Psoas muscle (tissue), 8 donors: ENCODE measurements at regions of chr9 and their contacts with region 1.

Region 1: DNA sequence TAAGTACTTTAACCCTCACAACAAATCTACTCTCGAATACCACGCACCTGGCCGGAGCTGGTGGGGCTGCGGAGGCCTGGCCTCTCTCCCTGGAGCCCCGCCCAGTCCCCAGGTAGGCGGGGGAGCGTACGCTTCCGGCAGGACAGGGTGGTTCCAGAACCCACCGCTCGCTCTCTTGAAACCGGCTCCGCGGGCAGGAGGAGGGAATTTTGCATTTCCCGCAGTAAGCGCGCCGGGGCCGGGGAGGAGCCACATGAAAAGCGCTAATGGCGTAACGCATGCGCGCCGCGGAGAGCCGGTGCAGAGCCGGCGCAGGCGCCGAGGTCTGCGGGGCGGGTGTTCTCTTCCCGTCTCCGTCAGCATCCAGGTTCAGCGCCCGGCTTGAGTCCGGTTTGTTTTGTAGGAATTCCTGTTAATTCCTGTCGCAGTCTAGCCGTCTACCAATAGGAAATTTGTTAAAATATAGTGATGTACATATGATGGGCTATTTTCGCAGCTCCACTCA is 20.8 kb downstream of the CAVIN4 start:
- DNase-seq: peak; percentile 83 to 88
- ATAC-seq: peak; percentile 56 to 87 (median 72)
- H3K4me3 ChIP-seq: peak overlapping the region; percentile 63
- H3K27ac ChIP-seq: no peak overlapping the region
- H3K4me1 ChIP-seq: peaks cover 4% of the 10 kb centered on the region
- H3K27me3 ChIP-seq: no peaks in the 10 kb centered on the region
- CTCF ChIP-seq: no peak

Region 2: DNA sequence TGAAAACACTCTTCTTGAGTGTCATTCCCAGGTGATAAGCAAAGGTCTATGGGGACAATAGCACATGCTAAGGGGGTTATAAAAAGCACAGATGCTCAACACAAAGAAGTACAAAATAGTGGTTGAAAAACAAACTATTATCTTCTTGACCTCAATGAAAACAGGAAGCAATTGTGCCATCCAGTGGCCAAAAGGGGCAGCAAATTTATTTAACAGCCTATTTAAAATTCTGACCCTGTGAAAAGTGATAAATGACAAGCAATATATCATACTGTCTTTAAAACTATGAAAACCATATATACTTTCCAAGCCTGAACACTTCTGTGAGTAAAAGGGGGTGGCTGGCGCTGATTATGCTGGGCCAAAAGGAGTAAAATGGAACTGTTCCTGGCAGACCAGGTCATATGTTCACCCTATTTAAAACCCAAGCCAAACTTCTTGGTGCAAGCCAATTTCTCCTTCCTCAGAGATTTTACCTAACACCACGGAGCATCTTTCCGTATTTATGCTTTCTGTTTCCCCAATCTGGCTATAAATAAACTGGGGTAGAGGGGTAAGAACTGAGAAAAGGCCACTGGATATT is 275.6 kb before region 1 on chr9:
- intact Hi-C with region 1: loop called in 1 of 2 experiments (anchors 5 kb)
- DNase-seq: no peak
- ATAC-seq: peak in 2 of 4 donors; percentile 46 to 69
- H3K4me3 ChIP-seq: no peak overlapping the region
- H3K27ac ChIP-seq: no peak overlapping the region
- H3K4me1 ChIP-seq: no peaks in the 10 kb centered on the region
- H3K27me3 ChIP-seq: no peaks in the 10 kb centered on the region
- CTCF ChIP-seq: peak; percentile 59

Region 3: GRCh38 chr9:100426530-100427428 is 171.9 kb before region 1 on chr9 and contains the start of gene MSANTD3:
- intact Hi-C with region 1: loop called in 1 of 2 experiments (anchors 5 kb)
- DNase-seq: peak; percentile 69 to 81
- ATAC-seq: peak; percentile 77 to 90 (median 84)
- H3K4me3 ChIP-seq: peak within 1 kb of the TSS; percentile 92
- H3K27ac ChIP-seq: peak within 1 kb of the TSS; percentile 91
- H3K4me1 ChIP-seq: peaks cover 35% of the 10 kb centered on the region
- H3K27me3 ChIP-seq: no peaks in the 10 kb centered on the region
- CTCF ChIP-seq: peak; percentile 32
- total RNA-seq, gene MSANTD3: 15.2 to 59.4 (median 32.6) TPM

Region 4: GRCh38 chr9:100472788-100473275 is 125.9 kb before region 1 on chr9 and contains the start of gene TMEFF1:
- intact Hi-C with region 1: loop called in 1 of 2 experiments (anchors 10 kb)
- DNase-seq: peak; percentile 42 to 67
- ATAC-seq: peak; percentile 55 to 82 (median 78)
- H3K4me3 ChIP-seq: peak within 1 kb of the TSS; percentile 83
- H3K27ac ChIP-seq: no peak within 1 kb of the TSS
- H3K4me1 ChIP-seq: peaks cover 19% of the 10 kb centered on the region
- H3K27me3 ChIP-seq: peaks cover 0 to 4% (median 0%) of the 10 kb centered on the region in 3 donors
- CTCF ChIP-seq: no peak
- total RNA-seq, gene TMEFF1: 0.29 to 0.56 (median 0.30) TPM in 3 of 4 donors, not detected in the other

Region 5: DNA sequence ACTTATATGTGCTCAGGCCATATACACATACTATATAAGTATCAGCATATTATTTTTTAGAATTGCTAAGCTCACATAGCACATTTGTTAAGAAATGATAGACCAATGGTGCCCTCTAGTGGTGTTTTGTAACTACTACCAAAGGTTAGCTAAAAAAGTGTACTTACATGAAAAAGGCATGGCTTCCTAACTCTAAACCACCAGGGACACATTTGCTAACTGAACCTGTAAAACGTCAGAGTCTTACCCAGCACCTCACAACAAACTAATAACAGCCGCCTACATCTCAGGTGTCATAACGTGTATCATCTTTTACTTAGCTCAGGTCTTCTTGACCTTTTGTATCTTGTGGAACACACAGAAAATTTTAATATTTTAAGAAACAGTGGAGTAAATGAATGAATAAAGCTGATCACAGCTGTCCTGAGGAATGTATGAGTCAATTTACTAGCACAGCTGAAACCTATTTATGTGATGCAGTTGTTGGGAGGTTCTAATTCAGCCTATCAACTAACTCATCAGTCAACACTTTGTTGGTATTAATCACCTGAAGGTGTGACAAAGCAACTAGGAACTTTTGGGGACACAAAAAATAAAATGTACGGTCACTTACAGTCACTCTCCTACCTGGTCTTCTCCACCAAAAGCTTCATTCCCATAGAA is 713.2 kb after region 1 on chr9:
- intact Hi-C with region 1: loop called (anchors 2 kb)
- DNase-seq: no peak
- ATAC-seq: peak; percentile 34 to 74 (median 55)
- H3K4me3 ChIP-seq: no peak overlapping the region
- H3K27ac ChIP-seq: no peak overlapping the region
- H3K4me1 ChIP-seq: no peaks in the 10 kb centered on the region
- H3K27me3 ChIP-seq: no peaks in the 10 kb centered on the region
- CTCF ChIP-seq: peak; percentile 73